Gastrocnemius medialis (tissue), 4 donors: ENCODE measurements at regions of chr13 and their contacts with region 1.

Region 1: DNA sequence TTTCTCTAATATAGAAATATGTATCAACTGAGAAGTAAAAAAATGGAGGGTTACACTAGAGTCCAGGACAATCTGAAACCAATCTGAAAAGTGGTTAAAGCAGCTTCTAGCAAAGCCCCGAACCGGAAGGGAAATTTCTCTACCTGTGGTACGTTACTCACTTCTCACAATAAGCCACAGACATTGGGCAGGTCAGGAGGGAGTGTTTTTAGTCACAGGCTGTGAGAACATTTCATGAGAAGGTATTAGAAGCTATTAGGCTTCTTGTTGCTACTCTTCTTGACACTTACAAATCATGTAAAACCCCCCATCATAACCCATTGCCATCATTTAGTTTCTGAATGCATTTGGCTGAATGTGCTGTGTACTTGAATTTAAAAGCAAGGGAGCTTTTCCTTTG is 120.9 kb downstream of the NUFIP1 start:
- DNase-seq: no peak
- ATAC-seq: no peak
- H3K4me3 ChIP-seq: no peak overlapping the region
- H3K27ac ChIP-seq: peak overlapping the region; percentile 86 to 95 (median 94)
- H3K4me1 ChIP-seq: peaks cover 32 to 34% of the 10 kb centered on the region in 2 donors
- H3K27me3 ChIP-seq: no peaks in the 10 kb centered on the region
- CTCF ChIP-seq: no peak
- POLR2A ChIP-seq: no peak

Region 2: DNA sequence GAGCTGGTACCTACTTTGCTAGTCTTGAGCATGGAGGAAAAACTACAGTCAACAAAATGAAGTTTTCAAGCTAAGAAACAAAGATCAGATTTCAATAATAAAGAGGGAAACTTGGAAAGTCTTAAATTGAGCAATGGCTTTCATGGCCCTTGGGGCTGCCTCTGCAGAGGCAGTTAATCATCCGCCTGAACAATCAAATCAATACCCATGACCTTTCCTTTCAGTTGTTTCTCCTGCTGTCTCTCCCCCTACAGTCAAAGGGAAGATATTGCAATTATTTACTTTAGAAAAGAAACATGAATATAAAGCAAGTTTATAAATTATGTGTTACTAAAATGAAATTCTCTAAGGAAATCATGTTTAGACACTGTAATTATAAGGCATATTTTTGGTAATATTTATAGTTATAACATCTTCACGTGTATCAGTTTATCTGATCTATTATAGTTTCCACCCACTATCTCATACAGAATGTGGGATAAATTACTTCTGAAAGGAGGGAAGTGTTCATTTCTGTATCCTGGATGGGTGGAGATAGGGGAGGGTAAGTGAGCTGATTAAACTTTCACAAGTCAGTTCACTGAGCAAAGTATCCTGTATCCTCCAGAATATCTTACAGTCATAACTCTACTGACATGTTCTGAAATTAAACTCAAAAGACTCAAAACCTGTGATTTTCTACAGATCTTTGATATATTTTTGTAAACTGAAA is 219.8 kb before region 1 on chr13:
- in situ Hi-C with region 1: no loop called
- intact Hi-C with region 1: no loop called
- DNase-seq: no peak
- ATAC-seq: no peak
- H3K4me3 ChIP-seq: no peak overlapping the region
- H3K27ac ChIP-seq: no peak overlapping the region
- H3K4me1 ChIP-seq: peaks cover 3 to 10% of the 10 kb centered on the region in 2 donors
- H3K27me3 ChIP-seq: no peaks in the 10 kb centered on the region
- CTCF ChIP-seq: peak in 1 of 5 experiments; percentile 33
- POLR2A ChIP-seq: no peak

Region 3: DNA sequence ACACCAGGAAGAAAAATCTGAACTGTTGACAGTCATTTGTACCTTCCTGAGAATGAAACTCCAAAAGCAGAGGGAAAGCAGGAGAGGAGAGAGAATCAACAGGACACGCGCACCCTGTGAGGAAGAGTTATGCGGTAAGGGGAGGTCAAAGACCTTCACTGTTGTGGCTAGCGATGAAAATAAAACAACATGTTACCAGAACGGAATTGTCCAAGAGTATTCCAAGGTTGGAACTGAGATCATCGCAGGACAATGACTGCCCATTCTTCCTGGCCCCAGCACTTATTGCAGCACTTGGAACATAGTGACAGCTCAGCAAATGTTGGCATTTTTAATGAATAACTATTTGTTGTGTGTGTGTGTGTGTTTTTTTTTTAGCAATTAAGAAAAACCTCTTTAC is 116.2 kb before region 1 on chr13:
- in situ Hi-C with region 1: no loop called
- intact Hi-C with region 1: loop called (anchors 5 kb)
- DNase-seq: peak in 1 of 2 donors; percentile 48
- ATAC-seq: peak; percentile 71 to 87
- H3K4me3 ChIP-seq: no peak overlapping the region
- H3K27ac ChIP-seq: peak overlapping the region; percentile 63 to 69 (median 67)
- H3K4me1 ChIP-seq: peaks cover 26 to 33% of the 10 kb centered on the region in 2 donors
- H3K27me3 ChIP-seq: no peaks in the 10 kb centered on the region
- CTCF ChIP-seq: no peak
- POLR2A ChIP-seq: peak in 1 of 2 donors; percentile 23

Region 4: DNA sequence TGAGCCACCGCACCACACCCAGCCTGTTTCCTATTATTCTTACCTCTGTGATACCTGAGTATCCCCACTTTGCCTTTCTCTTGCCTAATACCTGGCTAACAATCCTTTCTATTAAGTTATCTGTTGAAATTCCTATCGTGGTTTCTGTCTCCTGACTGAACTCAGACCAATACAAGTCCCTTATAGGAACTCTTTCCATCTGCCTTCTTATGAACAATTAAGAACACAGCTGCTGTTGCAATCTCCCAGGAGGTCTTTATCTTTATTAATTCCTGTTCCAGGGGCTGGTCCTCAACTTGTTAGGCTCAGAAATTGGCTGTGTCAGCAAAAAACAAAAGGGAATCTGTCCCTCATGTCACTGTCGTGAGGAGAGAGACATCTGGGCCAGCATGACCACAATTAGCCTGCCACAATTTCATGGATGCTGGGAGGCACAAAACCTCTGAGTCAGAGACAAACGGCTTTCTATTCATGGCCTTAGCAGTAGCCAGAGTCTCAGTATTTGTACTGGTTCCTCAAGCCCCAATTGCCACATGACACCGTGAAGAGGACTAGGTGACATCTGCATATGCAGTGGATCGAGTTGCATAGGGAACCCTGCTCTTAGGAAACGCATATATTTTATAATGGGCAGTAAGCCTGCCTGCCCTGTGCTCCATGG is 62.7 kb after region 1 on chr13:
- in situ Hi-C with region 1: no loop called
- intact Hi-C with region 1: loop called (anchors 2 kb)
- DNase-seq: peak; percentile 76 to 83
- ATAC-seq: peak; percentile 92 to 95
- H3K4me3 ChIP-seq: no peak overlapping the region
- H3K27ac ChIP-seq: peak overlapping the region; percentile 75 to 86 (median 82)
- H3K4me1 ChIP-seq: peaks cover 39 to 49% of the 10 kb centered on the region in 2 donors
- H3K27me3 ChIP-seq: no peaks in the 10 kb centered on the region
- CTCF ChIP-seq: no peak
- POLR2A ChIP-seq: peak; percentile 19 to 53